ENCODE measurements at regions of chr16 and their contacts with region 1.

Region 1: DNA sequence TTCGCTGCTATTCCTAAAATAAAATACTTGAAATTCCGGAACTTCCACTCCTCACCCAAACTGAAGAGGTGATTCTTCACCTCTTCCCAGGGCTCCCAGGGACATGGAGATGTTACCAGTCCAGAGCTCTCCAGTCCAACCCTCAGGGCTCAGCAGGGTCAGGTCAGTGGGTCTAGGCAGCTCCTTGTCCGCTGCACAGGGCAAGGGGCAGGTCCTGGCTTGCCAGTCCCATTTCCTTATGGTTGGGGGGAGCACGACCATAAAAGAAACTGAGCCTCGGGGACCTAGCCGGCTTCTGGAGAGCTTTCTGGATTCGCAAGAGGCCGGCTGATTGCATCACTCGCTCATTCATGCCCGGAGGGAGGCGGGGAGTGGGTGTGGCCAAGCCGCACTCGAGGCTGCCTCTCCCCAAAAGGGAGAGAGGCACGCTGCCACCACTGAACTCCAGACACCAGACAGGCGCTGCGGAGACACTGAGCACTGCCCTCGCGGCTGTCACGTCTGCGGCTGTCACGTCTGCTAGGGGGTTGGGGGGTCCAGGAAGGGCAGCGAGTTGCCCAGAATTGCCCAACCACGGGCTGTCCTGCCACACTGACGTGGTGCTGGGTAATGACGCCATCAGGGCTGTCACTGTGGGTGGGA is 15.8 kb downstream of the SLC7A5 start:
- DNase-seq: peak; percentile 65 to 92
- H3K4me3 ChIP-seq: peak overlapping the region in 1 of 4 experiments; percentile 14; a peak in 1 of 8 replicates
- H3K27ac ChIP-seq: peak overlapping the region; percentile 48; the same call in 1 of the 2 replicates
- H3K4me1 ChIP-seq: peaks cover 16 to 46% (median 33%) of the 10 kb centered on the region in 4 experiments
- H3K27me3 ChIP-seq: no peaks in the 10 kb centered on the region
- CTCF ChIP-seq: no peak
- EP300 ChIP-seq: no peak
- POLR2A ChIP-seq: peak in 1 of 2 experiments; percentile 47; a peak in 1 of 3 replicates
- RAD21 ChIP-seq: no peak

Region 2: DNA sequence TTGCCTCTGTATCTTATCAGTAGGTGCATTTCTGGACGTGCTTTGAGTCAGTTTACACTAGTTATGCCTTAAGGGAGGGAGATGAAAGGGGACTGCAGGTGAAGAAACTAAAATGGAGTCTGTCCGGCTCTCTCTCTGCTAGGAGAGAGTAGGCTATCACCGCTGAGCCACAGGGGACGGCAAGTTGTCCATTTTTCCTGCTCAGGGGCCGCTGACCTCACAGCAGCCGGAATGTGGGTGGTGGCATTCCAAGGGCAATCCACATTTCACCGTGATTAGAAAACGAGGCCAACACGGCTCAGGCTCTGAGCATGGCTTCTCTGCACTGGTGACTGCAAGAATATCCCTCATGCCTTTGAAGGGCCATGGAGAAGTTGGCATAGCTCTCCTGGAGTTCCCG is 68.7 kb before region 1 on chr16:
- CTCF ChIA-PET with region 1: interaction called, 120 read pairs
- POLR2A ChIA-PET with region 1: interaction called, 18 read pairs
- DNase-seq: no peak
- H3K4me3 ChIP-seq: no peak overlapping the region
- H3K27ac ChIP-seq: no peak overlapping the region
- H3K4me1 ChIP-seq: no peaks in the 10 kb centered on the region
- H3K27me3 ChIP-seq: no peaks in the 10 kb centered on the region
- CTCF ChIP-seq: no peak
- EP300 ChIP-seq: no peak
- POLR2A ChIP-seq: no peak
- RAD21 ChIP-seq: no peak

Region 3: DNA sequence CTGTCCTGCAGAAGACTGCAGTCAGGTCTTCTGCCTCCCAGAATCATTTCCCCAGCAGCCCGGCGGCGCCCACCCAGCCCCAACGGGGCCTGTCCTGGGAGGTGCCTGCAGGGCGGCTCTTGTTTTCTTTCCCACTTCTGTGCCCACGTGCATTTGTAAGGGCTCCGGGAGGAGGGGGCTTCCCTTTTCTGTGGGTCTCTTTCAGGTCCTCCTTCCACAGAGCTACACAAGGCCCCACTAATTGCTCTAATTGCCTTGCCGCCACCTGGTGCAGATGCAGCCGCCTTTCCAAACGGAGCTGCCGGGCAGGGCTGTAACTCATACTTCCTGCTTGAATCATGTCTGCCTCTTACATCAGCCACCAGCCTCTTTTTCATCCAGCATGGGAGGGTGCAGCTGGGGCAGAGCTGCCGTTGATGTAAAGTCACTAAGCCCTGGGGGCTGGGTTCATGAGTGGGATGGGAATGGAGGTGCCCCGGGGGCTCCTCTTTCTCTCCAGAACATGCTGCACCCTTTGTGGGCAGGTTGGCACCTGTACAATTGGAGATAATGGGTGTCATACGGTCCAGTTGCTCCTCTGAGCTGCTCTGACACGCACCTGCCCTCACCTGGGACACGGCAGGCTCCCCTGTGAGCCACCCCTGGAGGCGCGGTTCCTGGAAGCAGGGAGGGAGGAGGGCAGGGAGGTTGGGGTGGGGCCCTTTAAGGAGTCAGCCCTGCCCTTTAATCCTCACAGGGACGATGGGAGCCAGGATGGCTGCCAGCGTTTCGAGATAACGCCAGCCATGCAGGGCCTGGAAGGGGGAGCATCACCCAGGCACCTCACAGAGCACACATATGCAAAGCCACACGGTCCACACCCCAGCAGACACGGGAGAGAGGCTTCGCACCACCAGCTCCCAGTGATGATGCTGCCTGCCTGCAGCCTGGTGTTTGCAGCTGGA is 46.7 kb before region 1 on chr16:
- CTCF ChIA-PET with region 1: interaction called, 11 read pairs
- POLR2A ChIA-PET with region 1: interaction called, 16 read pairs
- DNase-seq: peak in 1 of 2 experiments; percentile 61
- H3K4me3 ChIP-seq: no peak overlapping the region
- H3K27ac ChIP-seq: no peak overlapping the region
- H3K4me1 ChIP-seq: peaks cover 0 to 14% (median 0%) of the 10 kb centered on the region in 4 experiments; a peak in 2 of 7 replicates
- H3K27me3 ChIP-seq: no peaks in the 10 kb centered on the region
- CTCF ChIP-seq: no peak
- EP300 ChIP-seq: no peak
- POLR2A ChIP-seq: no peak
- RAD21 ChIP-seq: no peak

Region 4: DNA sequence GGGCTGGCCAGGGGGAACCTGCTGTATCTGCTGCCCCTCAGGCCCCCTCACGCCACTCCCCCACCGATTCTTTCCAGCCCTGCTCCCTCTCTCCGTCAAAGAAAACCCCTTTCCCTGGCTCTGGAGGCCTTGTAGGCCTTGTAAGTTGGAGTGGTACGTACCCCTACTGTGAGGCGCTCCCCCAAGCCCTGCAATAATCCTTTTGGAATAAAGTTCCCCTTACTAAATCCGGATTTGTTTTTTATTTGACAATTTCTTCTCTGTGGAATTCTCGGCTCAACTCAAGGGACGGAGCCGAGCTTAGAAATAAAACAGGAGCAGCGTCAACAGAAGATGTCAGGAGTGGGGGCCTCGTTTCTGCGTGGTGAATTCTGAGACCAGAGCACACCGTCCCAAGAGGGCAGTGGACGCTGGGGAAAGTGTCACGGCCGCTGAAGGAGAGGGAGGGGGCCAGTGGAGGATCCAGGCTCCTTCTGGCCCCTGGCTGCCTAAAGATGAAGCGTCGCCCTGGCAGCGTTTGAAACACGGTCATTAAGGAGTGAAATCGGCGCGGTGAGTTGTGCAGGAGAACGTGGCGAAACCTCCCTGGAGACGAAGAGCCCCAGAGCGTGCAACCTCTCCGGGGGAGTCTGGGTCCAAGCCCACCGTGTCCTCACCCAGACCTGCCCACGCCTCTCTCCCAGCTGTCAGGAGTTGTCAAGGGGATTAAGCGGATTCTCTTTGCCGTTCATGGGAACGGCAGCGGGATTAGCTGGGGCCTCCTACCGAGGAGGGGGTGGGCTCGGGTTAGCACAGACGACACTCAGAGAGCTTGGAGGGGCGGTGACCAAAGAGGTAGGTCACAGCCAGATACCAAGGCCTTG is 31.2 kb before region 1 on chr16:
- CTCF ChIA-PET with region 1: interaction called, 64 read pairs
- POLR2A ChIA-PET with region 1: interaction called, 27 read pairs
- DNase-seq: no peak
- H3K4me3 ChIP-seq: no peak overlapping the region; a peak in 1 of 8 replicates
- H3K27ac ChIP-seq: no peak overlapping the region
- H3K4me1 ChIP-seq: peaks cover 15 to 53% (median 41%) of the 10 kb centered on the region in 4 experiments
- H3K27me3 ChIP-seq: no peaks in the 10 kb centered on the region
- CTCF ChIP-seq: no peak
- EP300 ChIP-seq: no peak
- POLR2A ChIP-seq: no peak
- RAD21 ChIP-seq: no peak

Region 5: GRCh38 chr16:87834623-87835407 is 18.7 kb before region 1 on chr16:
- CTCF ChIA-PET with region 1: interaction called, 115 read pairs
- POLR2A ChIA-PET with region 1: interaction called, 507 read pairs
- DNase-seq: no peak
- H3K4me3 ChIP-seq: no peak overlapping the region
- H3K27ac ChIP-seq: no peak overlapping the region
- H3K4me1 ChIP-seq: peaks cover 0 to 10% (median 5%) of the 10 kb centered on the region in 4 experiments; a peak in 6 of 7 replicates
- H3K27me3 ChIP-seq: no peaks in the 10 kb centered on the region
- CTCF ChIP-seq: no peak
- EP300 ChIP-seq: no peak
- POLR2A ChIP-seq: no peak
- RAD21 ChIP-seq: no peak

Region 6: DNA sequence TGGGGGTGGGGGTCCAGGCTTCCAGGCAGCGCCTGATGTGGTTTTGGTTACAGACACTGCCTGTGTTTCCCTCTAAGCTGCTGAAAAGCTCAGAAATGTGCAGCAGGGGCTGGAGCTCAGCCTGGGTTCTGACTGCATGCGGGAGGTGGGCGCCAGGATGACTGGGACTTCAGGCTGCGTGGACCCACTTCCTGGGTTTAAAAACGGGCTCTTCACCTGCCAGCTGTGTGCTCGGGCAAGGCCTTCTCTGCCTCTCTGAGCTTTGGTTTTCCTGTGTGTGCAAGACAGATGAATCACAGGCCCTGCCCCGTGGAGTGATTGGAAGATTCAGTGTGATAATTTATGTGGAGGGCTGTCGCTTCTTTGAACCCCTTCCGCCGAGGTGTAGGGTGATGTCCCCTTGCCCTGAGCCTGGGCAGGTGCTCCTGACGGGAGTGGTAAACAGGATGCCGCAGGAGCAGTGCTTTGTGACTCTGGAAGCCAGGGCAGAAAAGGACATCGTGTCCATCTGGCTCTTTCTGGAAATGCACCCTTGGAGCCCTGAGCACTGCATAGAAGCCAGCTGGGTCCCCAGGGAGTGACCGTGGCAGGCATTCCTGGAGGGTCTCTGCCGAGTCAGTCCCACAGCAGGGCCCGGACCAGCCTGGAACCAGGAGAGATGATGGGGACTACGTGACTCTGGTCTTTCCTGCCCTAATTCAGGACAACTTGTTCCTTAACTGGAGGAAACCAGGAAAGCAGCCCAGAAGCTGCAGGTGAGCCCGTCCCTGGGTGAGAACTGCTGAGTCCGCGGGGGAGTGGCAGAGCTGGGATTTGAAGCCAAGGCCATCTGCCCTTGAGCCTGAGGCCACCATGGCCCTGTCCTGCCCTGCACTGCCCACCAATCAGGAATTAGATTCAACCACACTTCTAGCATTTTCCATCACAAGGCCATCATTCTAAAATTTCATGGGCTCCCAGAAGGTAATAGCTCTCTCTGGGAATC is 44.3 kb after region 1 on chr16:
- CTCF ChIA-PET with region 1: interaction called, 17 read pairs
- POLR2A ChIA-PET with region 1: no interaction called
- DNase-seq: no peak
- H3K4me3 ChIP-seq: no peak overlapping the region
- H3K27ac ChIP-seq: no peak overlapping the region
- H3K4me1 ChIP-seq: no peaks in the 10 kb centered on the region
- H3K27me3 ChIP-seq: no peaks in the 10 kb centered on the region
- CTCF ChIP-seq: no peak
- EP300 ChIP-seq: no peak
- POLR2A ChIP-seq: no peak
- RAD21 ChIP-seq: no peak

Measured in H1 (cell line).